ENCODE measurements at regions of chr11 and their contacts with region 1.

Region 1: GRCh38 chr11:75248690-75249268 is 8.2 kb downstream of the TPBGL start:
- DNase-seq: peak; percentile 89
- ATAC-seq: peak; percentile 95
- H3K4me3 ChIP-seq: no peak overlapping the region
- H3K27ac ChIP-seq: no peak overlapping the region
- H3K4me1 ChIP-seq: peaks cover 0 to 2% of the 10 kb centered on the region in 2 experiments; a peak in 1 of 4 replicates
- H3K27me3 ChIP-seq: no peaks in the 10 kb centered on the region
- CTCF ChIP-seq: peak; percentile 99 to 100 (median 100)
- POLR2A ChIP-seq: no peak
- RAD21 ChIP-seq: peak; percentile 100

Region 2: DNA sequence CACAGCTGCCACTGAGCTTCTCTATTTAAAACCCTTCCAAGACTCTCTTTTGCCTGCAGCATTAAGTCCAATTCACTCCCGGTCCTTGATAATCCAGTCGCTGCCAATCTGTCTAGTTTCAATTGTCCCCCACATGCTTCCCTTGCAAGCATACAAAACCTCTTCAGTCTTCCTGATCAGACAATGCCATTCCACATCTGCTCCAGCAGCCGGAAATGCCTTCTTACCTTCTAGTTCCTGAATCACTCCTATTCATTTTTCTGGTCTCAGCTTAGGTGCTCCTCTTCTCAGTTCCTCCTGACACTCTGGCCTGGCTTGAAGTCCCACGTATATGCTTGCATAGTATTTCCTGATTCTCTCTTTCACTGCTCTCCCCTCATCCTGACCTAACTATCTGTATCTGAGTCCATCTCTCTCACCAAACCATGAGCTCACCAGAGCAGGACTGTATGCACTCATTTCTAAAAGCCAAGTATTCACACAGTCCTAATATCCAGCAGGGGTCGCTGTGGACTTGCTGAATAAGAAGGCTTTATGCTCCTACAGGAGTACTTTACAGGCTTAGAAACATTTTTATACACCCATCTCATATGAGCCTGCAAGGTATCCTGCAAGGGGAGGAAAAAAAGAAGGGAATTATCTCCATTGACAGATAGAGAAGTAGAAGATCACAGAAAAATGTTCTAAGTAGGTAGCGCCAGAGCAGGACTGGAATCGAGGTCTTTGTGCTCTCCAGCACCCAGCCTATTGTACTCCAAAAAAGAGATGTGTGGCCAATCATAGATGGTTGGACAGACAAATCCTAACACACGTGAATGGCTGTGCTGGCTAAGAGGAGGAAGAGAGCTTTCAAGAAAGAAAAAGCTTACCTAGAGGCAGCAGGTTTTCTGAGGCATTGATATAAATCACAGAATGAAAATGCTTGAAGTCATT is 319.1 kb before region 1 on chr11:
- CTCF ChIA-PET with region 1: interaction called, 22 read pairs
- POLR2A ChIA-PET with region 1: no interaction called
- RAD21 ChIA-PET with region 1: no interaction called
- intact Hi-C with region 1: loop called (anchors 1 kb)
- DNase-seq: peak; percentile 81
- ATAC-seq: peak; percentile 99
- H3K4me3 ChIP-seq: no peak overlapping the region
- H3K27ac ChIP-seq: no peak overlapping the region
- H3K4me1 ChIP-seq: no peaks in the 10 kb centered on the region
- H3K27me3 ChIP-seq: no peaks in the 10 kb centered on the region
- CTCF ChIP-seq: peak; percentile 85 to 99 (median 88)
- POLR2A ChIP-seq: no peak
- RAD21 ChIP-seq: peak; percentile 84

Region 3: GRCh38 chr11:75022759-75023396 is 225.9 kb before region 1 on chr11:
- CTCF ChIA-PET with region 1: interaction called, 69 read pairs
- POLR2A ChIA-PET with region 1: interaction called, 4 read pairs
- RAD21 ChIA-PET with region 1: interaction called, 5 to 6 read pairs
- intact Hi-C with region 1: loop called (anchors 1 kb)
- DNase-seq: peak; percentile 60
- ATAC-seq: peak; percentile 99
- H3K4me3 ChIP-seq: no peak overlapping the region
- H3K27ac ChIP-seq: no peak overlapping the region
- H3K4me1 ChIP-seq: no peaks in the 10 kb centered on the region
- H3K27me3 ChIP-seq: no peaks in the 10 kb centered on the region
- CTCF ChIP-seq: peak; percentile 95 to 98 (median 98)
- POLR2A ChIP-seq: no peak
- RAD21 ChIP-seq: peak; percentile 95

Region 4: DNA sequence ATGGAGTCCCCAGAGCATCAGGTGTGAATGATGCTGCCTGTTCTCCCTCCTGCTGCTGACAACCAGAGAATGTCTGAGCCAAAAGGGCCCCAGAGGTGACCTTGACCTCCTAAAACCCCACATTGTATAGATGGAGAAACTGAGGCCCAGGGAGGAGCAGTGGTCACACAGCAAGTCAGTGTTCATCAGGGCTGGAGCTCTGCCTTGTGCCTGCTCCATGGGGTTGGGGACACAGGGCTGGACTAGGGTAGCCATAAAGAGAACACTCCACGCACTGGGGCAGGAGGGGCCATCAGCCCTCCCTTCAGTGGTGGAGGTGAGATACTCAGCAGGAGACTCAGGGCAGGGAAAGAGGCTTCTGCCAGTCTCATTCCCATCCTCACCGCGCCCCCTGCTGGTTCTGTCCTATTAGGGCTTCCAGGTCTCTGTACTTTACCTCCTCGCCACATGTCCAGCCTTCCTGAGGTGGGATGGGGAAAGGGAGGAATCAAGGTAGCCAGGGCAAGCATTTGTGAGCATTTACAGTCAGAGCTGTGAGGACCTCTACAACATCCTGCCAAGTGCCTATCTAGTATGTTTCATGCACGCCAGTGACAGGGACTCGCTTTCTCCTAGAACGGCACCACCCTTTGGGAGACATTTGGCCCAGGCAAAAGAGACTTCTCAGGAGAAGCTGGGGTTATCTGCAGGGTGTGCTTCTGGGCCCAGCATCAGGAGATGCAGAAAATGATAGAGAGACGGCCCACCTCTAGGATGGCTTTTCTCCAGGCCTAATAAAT is 216.8 kb before region 1 on chr11:
- CTCF ChIA-PET with region 1: interaction called, 10 read pairs
- POLR2A ChIA-PET with region 1: no interaction called
- RAD21 ChIA-PET with region 1: no interaction called
- intact Hi-C with region 1: no loop called
- DNase-seq: peak; percentile 52
- ATAC-seq: peak; percentile 79
- H3K4me3 ChIP-seq: no peak overlapping the region
- H3K27ac ChIP-seq: no peak overlapping the region
- H3K4me1 ChIP-seq: peaks cover 17 to 29% of the 10 kb centered on the region in 2 experiments
- H3K27me3 ChIP-seq: no peaks in the 10 kb centered on the region
- CTCF ChIP-seq: peak; percentile 76 to 92 (median 81); a peak in 5 of 6 replicates
- POLR2A ChIP-seq: no peak
- RAD21 ChIP-seq: peak; percentile 72

Region 5: GRCh38 chr11:75204685-75205563 is 43.9 kb before region 1 on chr11:
- CTCF ChIA-PET with region 1: interaction called, 18 read pairs
- POLR2A ChIA-PET with region 1: no interaction called
- RAD21 ChIA-PET with region 1: interaction called, 5 to 9 read pairs
- intact Hi-C with region 1: no loop called
- DNase-seq: peak; percentile 64
- ATAC-seq: peak; percentile 100
- H3K4me3 ChIP-seq: no peak overlapping the region
- H3K27ac ChIP-seq: no peak overlapping the region
- H3K4me1 ChIP-seq: no peaks in the 10 kb centered on the region
- H3K27me3 ChIP-seq: peaks cover 30% of the 10 kb centered on the region
- CTCF ChIP-seq: peak; percentile 94 to 97 (median 94)
- POLR2A ChIP-seq: no peak
- RAD21 ChIP-seq: peak; percentile 92

Region 6: GRCh38 chr11:75214411-75214821 is 34.4 kb before region 1 on chr11:
- CTCF ChIA-PET with region 1: interaction called, 11 read pairs
- POLR2A ChIA-PET with region 1: no interaction called
- RAD21 ChIA-PET with region 1: interaction called in 1 of 2 experiments, 3 read pairs
- intact Hi-C with region 1: no loop called
- DNase-seq: peak; percentile 48
- ATAC-seq: peak; percentile 97
- H3K4me3 ChIP-seq: no peak overlapping the region
- H3K27ac ChIP-seq: no peak overlapping the region
- H3K4me1 ChIP-seq: no peaks in the 10 kb centered on the region
- H3K27me3 ChIP-seq: peaks cover 38% of the 10 kb centered on the region; the same call in 1 of the 2 replicates
- CTCF ChIP-seq: peak; percentile 35 to 57 (median 40); a peak in 5 of 6 replicates
- POLR2A ChIP-seq: no peak
- RAD21 ChIP-seq: peak; percentile 18; the same call in 1 of the 2 replicates

Region 7: GRCh38 chr11:75262961-75263852 is 14.4 kb after region 1 on chr11:
- CTCF ChIA-PET with region 1: interaction called, 16 read pairs
- POLR2A ChIA-PET with region 1: no interaction called
- RAD21 ChIA-PET with region 1: no interaction called
- intact Hi-C with region 1: no loop called
- DNase-seq: no peak
- ATAC-seq: no peak
- H3K4me3 ChIP-seq: no peak overlapping the region
- H3K27ac ChIP-seq: no peak overlapping the region
- H3K4me1 ChIP-seq: no peaks in the 10 kb centered on the region
- H3K27me3 ChIP-seq: no peaks in the 10 kb centered on the region
- CTCF ChIP-seq: no peak
- POLR2A ChIP-seq: no peak
- RAD21 ChIP-seq: no peak

Measured in HCT116 (cell line).